A673 (cell line): ENCODE measurements at regions of chr9 and their contacts with region 1.

Region 1: GRCh38 chr9:112112941-112113681 is 62.0 kb downstream of the SUSD1 start:
- DNase-seq: peak; percentile 30
- H3K4me3 ChIP-seq: no peak overlapping the region
- H3K27ac ChIP-seq: no peak overlapping the region
- H3K4me1 ChIP-seq: no peaks in the 10 kb centered on the region
- H3K27me3 ChIP-seq: no peaks in the 10 kb centered on the region
- CTCF ChIP-seq: peak; percentile 46; the same call in 1 of the 2 replicates

Region 2: DNA sequence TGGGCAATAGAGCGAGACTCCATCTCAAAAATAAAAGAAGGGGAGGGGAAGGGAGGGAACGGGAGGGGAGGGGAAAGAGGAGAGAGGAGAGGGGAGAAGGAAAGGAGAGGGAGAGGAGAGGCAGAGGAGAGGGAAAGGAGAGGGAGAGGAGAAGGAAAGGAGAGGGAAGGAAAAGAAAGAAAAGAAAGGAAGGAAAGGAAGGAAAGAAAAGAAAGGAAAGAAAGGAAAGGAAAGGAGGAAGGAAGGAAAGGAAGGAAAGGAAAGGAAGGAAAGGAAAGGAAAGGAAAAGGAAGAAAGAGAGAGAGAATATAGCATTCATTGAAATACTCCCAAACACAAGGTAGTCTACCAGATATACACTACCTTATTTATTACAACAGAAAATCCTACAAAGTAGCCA is 17.2 kb after region 1 on chr9:
- CTCF ChIA-PET with region 1: interaction called, 17 read pairs
- POLR2A ChIA-PET with region 1: no interaction called
- intact Hi-C with region 1: no loop called
- DNase-seq: no peak
- H3K4me3 ChIP-seq: no peak overlapping the region
- H3K27ac ChIP-seq: no peak overlapping the region
- H3K4me1 ChIP-seq: no peaks in the 10 kb centered on the region
- H3K27me3 ChIP-seq: no peaks in the 10 kb centered on the region
- CTCF ChIP-seq: no peak

Region 3: DNA sequence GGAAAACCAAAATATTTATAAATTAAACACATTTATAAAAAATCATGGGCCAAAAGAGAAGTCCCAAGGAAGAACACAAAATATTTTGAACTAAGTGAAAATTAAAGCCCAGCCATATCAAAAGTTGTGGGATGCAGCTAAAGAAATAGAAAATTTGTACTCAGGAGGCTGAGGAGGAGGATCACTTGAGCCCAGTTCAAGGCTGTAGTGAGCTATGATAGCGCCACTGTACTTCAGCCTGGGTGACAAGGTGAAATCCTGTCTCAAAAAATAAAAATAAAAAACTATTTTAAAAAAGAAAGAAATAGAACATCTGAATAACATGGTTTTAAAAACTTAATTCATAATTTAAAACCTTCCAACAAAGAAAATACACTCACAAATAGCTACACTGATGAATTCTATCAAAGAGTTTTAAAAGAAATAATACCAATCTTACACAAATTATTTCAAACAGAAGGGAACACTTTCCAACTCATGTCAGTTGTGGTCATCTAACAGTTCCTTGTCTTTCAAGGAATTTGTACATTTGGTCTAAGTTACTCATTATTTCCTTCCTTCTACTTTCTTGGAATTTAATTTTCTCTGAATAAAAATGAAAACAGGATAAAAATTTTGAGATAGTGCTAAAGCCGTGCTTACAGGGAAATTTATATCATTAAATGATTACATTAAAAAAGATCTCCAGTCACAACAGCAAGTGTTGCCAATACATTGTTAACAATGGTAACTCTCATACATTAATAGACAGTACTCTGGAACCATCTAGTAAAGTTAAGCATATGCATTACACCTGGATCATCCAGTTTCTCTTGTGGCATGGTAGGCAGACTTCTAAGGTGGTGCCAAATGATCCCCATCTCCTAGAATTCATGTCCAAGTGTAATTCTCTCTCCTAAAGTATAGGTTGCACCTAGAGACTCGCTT is 202.5 kb after region 1 on chr9:
- CTCF ChIA-PET with region 1: no interaction called
- POLR2A ChIA-PET with region 1: no interaction called
- intact Hi-C with region 1: no loop called
- DNase-seq: no peak
- H3K4me3 ChIP-seq: no peak overlapping the region
- H3K27ac ChIP-seq: no peak overlapping the region
- H3K4me1 ChIP-seq: no peaks in the 10 kb centered on the region
- H3K27me3 ChIP-seq: no peaks in the 10 kb centered on the region
- CTCF ChIP-seq: no peak